Right lobe of liver (tissue), 6 donors: ENCODE measurements at regions of chr3 and their contacts with region 1.

Region 1: DNA sequence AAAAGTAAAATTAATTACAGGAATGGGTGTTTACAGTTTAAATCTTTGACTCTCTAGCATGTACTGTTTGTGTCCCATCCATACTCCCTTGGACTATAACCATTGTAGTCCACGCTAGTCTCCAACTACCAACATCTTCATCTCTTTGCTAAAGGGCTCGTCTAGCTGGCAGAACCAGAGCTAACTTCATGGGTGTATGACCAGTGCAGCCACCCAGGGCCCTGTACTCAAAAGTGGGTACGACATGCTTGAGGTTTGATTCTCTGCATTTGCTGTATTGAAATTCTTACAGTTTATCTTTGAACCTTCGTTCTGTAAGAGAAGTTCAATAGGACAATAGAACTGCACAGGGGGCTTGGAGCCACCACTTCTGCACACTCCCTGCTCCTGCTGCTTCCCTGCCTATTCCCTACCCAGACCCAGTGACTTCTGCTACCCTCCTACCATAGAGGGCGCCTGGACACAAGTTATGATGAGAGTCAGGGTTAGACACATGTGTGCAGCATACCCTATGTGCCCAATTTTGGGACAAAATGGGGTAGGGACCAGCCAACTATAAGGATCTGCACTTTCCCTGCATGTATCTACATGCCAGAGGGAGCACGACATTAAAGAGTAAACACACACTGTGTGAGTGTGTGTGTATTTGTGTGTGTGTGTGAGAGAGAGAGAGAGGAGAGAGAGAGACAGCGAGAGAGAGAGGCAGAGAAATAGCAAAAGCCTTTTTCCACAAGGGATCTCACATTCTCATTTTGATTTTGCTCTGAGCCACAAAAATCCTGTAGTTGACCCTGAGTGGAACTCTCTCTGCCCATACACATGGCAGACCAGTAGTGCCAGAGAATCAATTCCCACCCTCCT is 59.0 kb upstream of the NECTIN3 start:
- DNase-seq: peak in 2 of 3 donors; percentile 37 to 68
- ATAC-seq: peak; percentile 92 to 97 (median 94)
- H3K4me3 ChIP-seq: no peak overlapping the region
- H3K27ac ChIP-seq: no peak overlapping the region
- H3K4me1 ChIP-seq: no peaks in the 10 kb centered on the region
- H3K27me3 ChIP-seq: no peaks in the 10 kb centered on the region
- CTCF ChIP-seq: peak; percentile 52 to 66 (median 52)
- POLR2A ChIP-seq: no peak

Region 2: GRCh38 chr3:111071257-111072015 is 58.8 kb after region 1 on chr3 and contains the start of gene NECTIN3:
- intact Hi-C with region 1: loop called in 1 of 2 experiments (anchors 10 kb)
- DNase-seq: peak; percentile 96 to 98 (median 98)
- ATAC-seq: peak; percentile 91 to 97 (median 92)
- H3K4me3 ChIP-seq: peak within 1 kb of the TSS; percentile 81 to 87 (median 82)
- H3K27ac ChIP-seq: peak within 1 kb of the TSS; percentile 82 to 96 (median 94)
- H3K4me1 ChIP-seq: peaks cover 0 to 10% (median 2%) of the 10 kb centered on the region in 4 donors
- H3K27me3 ChIP-seq: no peaks in the 10 kb centered on the region
- CTCF ChIP-seq: no peak
- POLR2A ChIP-seq: peak; percentile 60
- total RNA-seq, gene NECTIN3: 15.1 to 31.0 (median 23.1) TPM